Naive thymus-derived CD4-positive, alpha-beta T cell (primary cell): ENCODE measurements at regions of chr20 and their contacts with region 1.

Region 1: GRCh38 chr20:49484180-49485140 is 2.0 kb upstream of the KCNB1 start:
- DNase-seq: peak; percentile 18 to 77 (median 44)
- ATAC-seq: peak; percentile 84
- H3K4me3 ChIP-seq: peak overlapping the region; percentile 29
- H3K4me3 Mint-ChIP-seq: peak overlapping the region; percentile 74 to 94 (median 87)
- H3K27ac ChIP-seq: no peak overlapping the region
- H3K27ac Mint-ChIP-seq: peak overlapping the region in 3 of 9 donors; percentile 50 to 65 (median 59)
- H3K4me1 ChIP-seq: peaks cover 0 to 7% of the 10 kb centered on the region in 2 donors
- H3K4me1 Mint-ChIP-seq: peaks cover 0 to 15% (median 8%) of the 10 kb centered on the region in 7 donors
- H3K27me3 ChIP-seq: peaks cover 0 to 21% of the 10 kb centered on the region in 2 donors
- H3K27me3 Mint-ChIP-seq: peaks cover 70 to 78% (median 73%) of the 10 kb centered on the region in 5 donors

Region 2: DNA sequence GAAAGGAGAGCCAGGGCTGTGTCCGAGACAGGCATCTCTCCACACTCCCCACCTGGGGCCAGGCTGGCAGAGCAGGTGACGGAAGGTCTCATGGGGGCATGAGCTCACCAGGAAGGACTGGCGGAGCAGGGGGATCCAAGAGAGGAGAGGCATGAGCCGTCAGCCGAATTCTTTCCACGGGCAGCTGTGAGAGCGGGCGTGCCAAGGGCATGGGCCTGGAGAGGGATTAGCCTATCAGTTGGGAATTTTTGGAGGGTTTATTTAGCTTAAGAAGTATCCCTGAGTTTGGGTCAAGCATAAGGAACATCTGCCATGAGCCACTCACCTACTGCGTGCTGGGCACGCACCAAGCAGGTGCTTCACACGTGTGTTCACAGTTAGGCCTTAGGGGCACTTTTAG is 146.4 kb before region 1 on chr20:
- CTCF ChIA-PET with region 1: no interaction called
- POLR2A ChIA-PET with region 1: no interaction called
- intact Hi-C with region 1: loop called in 1 of 2 experiments (anchors 2 kb)
- DNase-seq: no peak
- ATAC-seq: no peak
- H3K4me3 ChIP-seq: no peak overlapping the region
- H3K4me3 Mint-ChIP-seq: no peak overlapping the region
- H3K27ac ChIP-seq: no peak overlapping the region
- H3K27ac Mint-ChIP-seq: no peak overlapping the region
- H3K4me1 ChIP-seq: no peaks in the 10 kb centered on the region
- H3K4me1 Mint-ChIP-seq: peaks cover 0 to 4% (median 0%) of the 10 kb centered on the region in 7 donors
- H3K27me3 ChIP-seq: peaks cover 0 to 5% of the 10 kb centered on the region in 2 donors
- H3K27me3 Mint-ChIP-seq: peaks cover 3 to 12% (median 9%) of the 10 kb centered on the region in 5 donors

Region 3: GRCh38 chr20:49384437-49385088 is 99.9 kb before region 1 on chr20:
- CTCF ChIA-PET with region 1: no interaction called
- POLR2A ChIA-PET with region 1: no interaction called
- intact Hi-C with region 1: loop called in 1 of 2 experiments (anchors 1 kb)
- DNase-seq: peak in 8 of 9 donors; percentile 5 to 73 (median 26)
- ATAC-seq: peak; percentile 46
- H3K4me3 ChIP-seq: no peak overlapping the region
- H3K4me3 Mint-ChIP-seq: no peak overlapping the region
- H3K27ac ChIP-seq: no peak overlapping the region
- H3K27ac Mint-ChIP-seq: peak overlapping the region in 1 of 9 donors; percentile 84
- H3K4me1 ChIP-seq: no peaks in the 10 kb centered on the region
- H3K4me1 Mint-ChIP-seq: peaks cover 0 to 3% (median 0%) of the 10 kb centered on the region in 7 donors
- H3K27me3 ChIP-seq: no peaks in the 10 kb centered on the region
- H3K27me3 Mint-ChIP-seq: peaks cover 21 to 57% (median 32%) of the 10 kb centered on the region in 5 donors